ENCODE measurements at regions of chr11 and their contacts with region 1.

Region 1: GRCh38 chr11:19800162-19800561 is 87.5 kb downstream of the NAV2 start:
- DNase-seq: no peak
- H3K4me3 ChIP-seq: no peak overlapping the region
- H3K27ac ChIP-seq: no peak overlapping the region
- H3K4me1 ChIP-seq: peaks cover 8 to 49% (median 26%) of the 10 kb centered on the region in 4 experiments; a peak in 6 of 7 replicates
- H3K27me3 ChIP-seq: no peaks in the 10 kb centered on the region
- CTCF ChIP-seq: peak; percentile 35 to 54 (median 37)
- EP300 ChIP-seq: no peak
- POLR2A ChIP-seq: no peak
- RAD21 ChIP-seq: peak; percentile 64 to 75

Region 2: GRCh38 chr11:19566583-19567379 is 233.4 kb before region 1 on chr11:
- CTCF ChIA-PET with region 1: interaction called, 32 read pairs
- POLR2A ChIA-PET with region 1: no interaction called
- DNase-seq: no peak
- H3K4me3 ChIP-seq: no peak overlapping the region
- H3K27ac ChIP-seq: no peak overlapping the region
- H3K4me1 ChIP-seq: no peaks in the 10 kb centered on the region
- H3K27me3 ChIP-seq: no peaks in the 10 kb centered on the region; a peak in 1 of 7 replicates
- CTCF ChIP-seq: no peak
- EP300 ChIP-seq: no peak
- POLR2A ChIP-seq: no peak
- RAD21 ChIP-seq: no peak

Region 3: DNA sequence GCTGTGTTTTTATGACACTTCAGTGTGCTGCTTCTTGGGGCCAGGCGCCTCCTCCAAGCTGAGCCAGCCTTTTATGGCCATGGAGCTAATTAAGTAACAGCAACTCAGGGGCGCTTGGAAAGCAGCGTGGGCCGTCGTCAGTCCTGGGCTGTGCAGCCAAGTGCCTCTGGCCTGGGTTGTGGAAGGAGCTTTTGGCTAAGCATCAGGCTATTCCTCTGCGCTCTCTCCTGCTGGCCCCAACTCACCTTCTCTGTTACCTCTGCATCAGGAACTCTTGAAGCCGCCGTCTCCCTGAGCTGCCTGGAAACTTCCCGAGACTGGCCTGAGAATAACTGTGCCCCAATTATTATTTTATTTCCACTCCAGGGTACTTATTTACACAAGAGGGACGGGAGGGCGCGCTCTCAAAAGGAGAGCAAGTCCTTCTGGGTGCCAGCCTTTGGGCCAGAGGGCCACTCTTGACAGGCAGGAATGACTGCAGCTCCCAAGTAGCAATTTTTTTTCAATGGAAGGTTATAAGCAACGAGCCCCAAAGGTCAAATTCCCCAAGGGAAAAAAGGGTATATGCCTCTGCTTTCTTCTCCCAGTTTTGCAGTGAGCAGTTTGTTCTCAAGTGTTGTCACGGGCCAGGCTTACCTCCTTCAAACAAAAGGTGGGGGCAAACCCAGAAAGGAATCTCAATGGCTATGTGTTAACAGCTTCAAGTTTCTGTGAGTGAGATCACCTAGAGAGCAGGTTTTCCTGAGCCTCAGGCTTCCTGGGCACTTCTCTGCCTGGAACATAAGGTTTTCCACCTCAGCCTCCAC is 126.0 kb before region 1 on chr11:
- CTCF ChIA-PET with region 1: interaction called, 10 read pairs
- POLR2A ChIA-PET with region 1: no interaction called
- DNase-seq: peak in 1 of 2 experiments; percentile 54
- H3K4me3 ChIP-seq: no peak overlapping the region
- H3K27ac ChIP-seq: no peak overlapping the region
- H3K4me1 ChIP-seq: peaks cover 2 to 18% (median 13%) of the 10 kb centered on the region in 4 experiments; a peak in 5 of 7 replicates
- H3K27me3 ChIP-seq: peaks cover 0 to 2% (median 0%) of the 10 kb centered on the region in 4 experiments; a peak in 1 of 7 replicates
- CTCF ChIP-seq: no peak
- EP300 ChIP-seq: no peak
- POLR2A ChIP-seq: no peak
- RAD21 ChIP-seq: no peak

Region 4: DNA sequence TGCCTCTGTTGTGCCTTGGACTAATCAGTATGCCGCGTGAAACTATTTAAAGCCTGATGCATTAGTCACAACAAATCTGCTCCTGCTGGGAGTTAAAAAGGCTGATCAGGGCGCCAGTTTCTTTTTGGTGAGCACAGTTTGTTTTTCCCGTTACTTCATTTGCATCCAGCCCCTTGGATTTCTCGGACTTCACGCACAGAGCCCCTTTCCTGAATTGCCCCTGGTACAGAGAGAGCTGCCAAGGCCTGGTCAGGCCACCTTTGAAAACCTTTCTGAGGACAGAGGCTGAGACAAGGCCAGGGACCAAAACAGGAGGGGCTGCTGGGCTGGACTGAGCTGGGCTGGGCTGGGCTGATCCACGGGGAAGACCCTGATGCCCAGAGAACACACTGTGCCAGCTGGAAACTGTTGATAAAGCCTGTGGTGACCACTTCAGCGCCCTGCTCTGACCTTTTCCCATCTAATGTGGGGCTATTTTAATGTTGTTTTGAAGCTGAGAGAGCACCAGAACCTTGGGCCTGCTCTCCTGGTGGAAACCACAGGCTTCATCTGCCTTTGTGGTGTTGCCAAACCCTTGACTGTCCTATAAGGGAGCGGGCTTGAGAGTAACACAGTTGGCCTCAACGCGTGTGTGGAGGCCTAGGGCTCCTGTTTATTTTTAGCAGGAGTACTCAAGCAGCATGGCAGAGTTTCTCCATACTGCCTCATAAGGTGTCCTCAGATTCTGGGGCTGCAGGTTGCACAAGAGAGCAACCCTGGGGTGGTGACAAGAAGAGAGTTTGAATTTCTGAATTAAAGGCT is 43.3 kb before region 1 on chr11:
- CTCF ChIA-PET with region 1: interaction called, 11 read pairs
- POLR2A ChIA-PET with region 1: no interaction called
- DNase-seq: no peak
- H3K4me3 ChIP-seq: no peak overlapping the region
- H3K27ac ChIP-seq: no peak overlapping the region
- H3K4me1 ChIP-seq: peaks cover 0 to 18% (median 11%) of the 10 kb centered on the region in 4 experiments; a peak in 6 of 7 replicates
- H3K27me3 ChIP-seq: no peaks in the 10 kb centered on the region
- CTCF ChIP-seq: no peak
- EP300 ChIP-seq: no peak
- POLR2A ChIP-seq: no peak
- RAD21 ChIP-seq: no peak

Region 5: GRCh38 chr11:19777377-19778102 is 22.6 kb before region 1 on chr11:
- CTCF ChIA-PET with region 1: interaction called, 25 read pairs
- POLR2A ChIA-PET with region 1: interaction called, 14 read pairs
- DNase-seq: no peak
- H3K4me3 ChIP-seq: peak overlapping the region; percentile 84 to 96 (median 90)
- H3K27ac ChIP-seq: peak overlapping the region; percentile 92
- H3K4me1 ChIP-seq: peaks cover 17 to 43% (median 37%) of the 10 kb centered on the region in 4 experiments
- H3K27me3 ChIP-seq: no peaks in the 10 kb centered on the region
- CTCF ChIP-seq: no peak
- EP300 ChIP-seq: peak in 1 of 2 experiments; percentile 7; a peak in 1 of 3 replicates
- POLR2A ChIP-seq: peak; percentile 78 to 81
- RAD21 ChIP-seq: no peak

Region 6: GRCh38 chr11:19814421-19814820 is 14.3 kb after region 1 on chr11:
- CTCF ChIA-PET with region 1: interaction called, 44 read pairs
- POLR2A ChIA-PET with region 1: interaction called, 3 read pairs
- DNase-seq: no peak
- H3K4me3 ChIP-seq: no peak overlapping the region
- H3K27ac ChIP-seq: no peak overlapping the region
- H3K4me1 ChIP-seq: peaks cover 28 to 50% (median 42%) of the 10 kb centered on the region in 4 experiments
- H3K27me3 ChIP-seq: no peaks in the 10 kb centered on the region
- CTCF ChIP-seq: peak; percentile 53 to 75 (median 69)
- EP300 ChIP-seq: no peak
- POLR2A ChIP-seq: no peak
- RAD21 ChIP-seq: peak; percentile 80 to 86

Measured in H1 (cell line).